Lower leg skin (tissue), 4 donors: ENCODE measurements at regions of chr19 and their contacts with region 1.

Region 1: DNA sequence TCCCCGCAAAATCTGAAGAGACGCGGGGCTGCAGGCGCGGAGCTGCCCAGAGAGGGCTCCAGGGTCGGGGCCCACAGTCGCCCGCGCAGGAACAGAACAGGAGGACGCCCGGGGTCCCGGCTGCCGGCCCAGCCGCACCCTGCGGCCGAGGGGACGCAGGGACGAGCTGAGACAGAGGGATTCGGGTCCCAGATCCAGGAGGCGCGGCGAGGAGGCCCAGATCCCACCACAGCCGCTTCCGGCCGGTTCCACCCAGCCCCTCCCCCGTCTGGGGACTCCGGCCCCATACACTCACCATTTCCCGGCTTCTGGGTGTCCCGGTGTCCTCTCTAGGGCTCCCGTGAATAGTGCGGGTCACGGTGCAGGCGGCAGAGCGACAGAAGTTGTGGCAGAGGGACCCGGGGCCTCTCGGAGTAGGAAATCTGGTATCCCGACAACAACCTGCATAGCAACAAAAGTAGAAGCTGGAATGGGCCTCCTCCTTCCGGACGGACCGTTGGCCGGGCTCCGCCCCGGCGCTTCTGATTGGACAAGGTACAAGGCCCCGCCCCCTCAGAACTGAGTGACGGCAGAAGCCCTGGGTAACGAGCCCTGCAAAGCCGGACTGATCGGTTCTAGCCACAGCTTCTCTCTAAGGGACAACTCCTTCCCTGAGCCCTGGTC is at the start of gene ZNF20:
- DNase-seq: peak; percentile 97 to 99
- H3K4me3 ChIP-seq: peak within 1 kb of the TSS; percentile 62
- CTCF ChIP-seq: no peak
- POLR2A ChIP-seq: no peak
- total RNA-seq, gene ZNF20: 1.5 to 6.1 (median 4.0) TPM

Region 2: GRCh38 chr19:11964858-11965645 is 175.0 kb before region 1 on chr19 and contains the start of gene ZNF763:
- intact Hi-C with region 1: loop called (anchors 5 kb)
- DNase-seq: peak; percentile 96 to 99
- H3K4me3 ChIP-seq: peak within 1 kb of the TSS; percentile 73
- CTCF ChIP-seq: no peak
- POLR2A ChIP-seq: no peak
- total RNA-seq, gene ZNF763: 1.9 to 7.8 (median 4.3) TPM

Region 3: DNA sequence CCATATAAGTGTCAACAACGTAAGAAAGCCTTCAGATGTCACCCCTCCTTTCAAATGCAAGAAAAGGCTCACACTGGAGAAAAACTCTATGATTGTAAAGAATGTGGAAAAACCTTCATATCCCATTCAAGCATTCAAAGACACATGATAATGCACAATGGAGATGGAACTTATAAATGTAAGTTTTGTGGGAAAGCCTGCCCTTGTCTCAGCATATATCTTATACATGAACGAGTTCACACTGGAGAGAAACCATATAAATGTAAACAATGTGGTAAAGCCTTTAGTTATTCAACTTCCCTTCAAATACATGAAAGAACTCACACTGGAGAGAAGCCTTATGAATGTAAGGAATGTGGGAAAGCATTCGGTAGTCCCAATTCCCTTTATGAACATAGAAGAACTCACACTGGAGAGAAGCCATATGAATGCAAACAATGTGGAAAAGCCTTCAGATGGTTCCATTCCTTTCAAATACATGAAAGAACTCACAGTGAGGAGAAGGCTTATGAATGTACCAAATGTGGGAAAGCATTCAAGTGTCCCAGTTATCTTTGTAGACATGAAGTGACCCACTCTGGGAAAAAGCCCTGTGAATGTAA is 64.4 kb before region 1 on chr19:
- intact Hi-C with region 1: loop called (anchors 10 kb)
- DNase-seq: no peak
- H3K4me3 ChIP-seq: no peak overlapping the region
- CTCF ChIP-seq: no peak
- POLR2A ChIP-seq: no peak

Region 4: DNA sequence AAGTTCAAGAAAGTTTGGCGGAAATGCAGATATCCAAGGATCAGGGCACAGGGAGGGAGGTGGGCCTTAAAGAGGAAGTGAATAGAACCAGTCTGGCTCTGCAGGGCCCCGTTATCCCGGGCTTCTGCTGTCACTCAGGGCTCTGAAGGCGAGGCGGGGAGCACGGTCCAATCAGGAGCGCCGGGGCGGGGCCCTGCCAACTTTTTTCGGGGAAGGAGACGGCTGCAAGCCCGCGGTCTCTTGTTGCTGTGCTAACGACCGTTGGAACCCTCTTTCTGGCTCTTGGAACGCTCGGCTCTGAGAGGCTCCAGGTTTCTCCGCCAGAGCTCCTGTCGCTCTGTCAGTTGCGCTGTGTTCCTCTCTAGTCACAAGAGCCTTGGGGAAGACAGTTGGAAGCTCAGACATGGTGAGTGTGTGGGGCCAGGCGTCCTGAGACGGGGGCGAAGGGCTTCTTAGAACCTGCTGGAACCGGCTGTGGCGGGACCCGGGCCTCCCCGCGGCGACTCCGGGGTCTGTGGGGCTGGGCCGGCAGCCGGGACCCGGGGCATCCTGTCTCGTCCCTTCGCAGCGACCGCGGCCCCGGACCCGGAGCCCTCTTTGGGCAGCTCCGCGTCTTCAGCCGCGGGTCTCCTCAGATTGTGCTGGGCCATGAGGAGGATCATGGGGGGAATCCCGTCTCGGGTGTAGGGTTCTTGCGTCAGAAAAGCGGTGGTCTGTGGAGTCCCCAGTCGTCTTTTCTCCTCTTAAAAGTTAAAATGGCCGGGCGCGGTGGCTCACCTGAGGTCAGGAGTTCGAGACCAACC is 47.8 kb before region 1 on chr19:
- intact Hi-C with region 1: no loop called
- DNase-seq: peak; percentile 87 to 97
- H3K4me3 ChIP-seq: peak overlapping the region; percentile 60
- CTCF ChIP-seq: no peak
- POLR2A ChIP-seq: no peak